A673 (cell line): ENCODE measurements at regions of chr1 and their contacts with region 1.

Region 1: GRCh38 chr1:27473755-27474154 is 16.2 kb downstream of the WASF2 start:
- DNase-seq: no peak
- H3K4me3 ChIP-seq: no peak overlapping the region
- H3K27ac ChIP-seq: no peak overlapping the region
- H3K4me1 ChIP-seq: peaks cover 4% of the 10 kb centered on the region
- H3K27me3 ChIP-seq: no peaks in the 10 kb centered on the region
- CTCF ChIP-seq: no peak

Region 2: DNA sequence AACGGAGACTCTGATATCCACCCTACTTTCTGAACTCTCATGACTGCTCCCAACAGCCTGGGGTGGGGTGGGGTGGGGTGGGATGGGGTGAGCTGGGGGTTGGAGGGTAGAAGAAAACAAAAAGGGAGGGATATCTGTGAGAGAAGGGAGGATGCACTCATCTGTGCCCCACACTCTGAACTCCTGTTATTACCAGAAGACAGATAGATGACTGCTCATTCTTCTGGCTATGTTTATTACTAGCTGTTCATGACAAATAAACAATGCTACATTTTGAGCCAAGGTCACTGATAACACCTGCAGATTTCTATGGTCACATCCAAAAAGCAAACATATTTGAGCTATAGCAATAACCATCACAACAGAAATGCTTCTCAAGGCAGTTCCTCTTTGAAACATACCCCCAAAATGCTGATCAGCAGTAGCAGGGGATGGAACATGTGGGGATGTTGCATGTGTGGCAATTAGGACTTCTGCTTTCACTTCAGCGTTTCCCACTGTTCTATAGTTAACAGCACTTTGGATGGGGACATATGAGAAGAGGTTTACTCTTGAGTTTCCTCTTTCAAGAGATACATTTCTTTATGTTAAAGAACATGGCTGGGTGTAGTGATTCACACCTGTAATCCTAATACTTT is 38.1 kb before region 1 on chr1:
- CTCF ChIA-PET with region 1: no interaction called
- POLR2A ChIA-PET with region 1: interaction called, 26 read pairs
- intact Hi-C with region 1: no loop called
- DNase-seq: no peak
- H3K4me3 ChIP-seq: no peak overlapping the region
- H3K27ac ChIP-seq: peak overlapping the region; percentile 81
- H3K4me1 ChIP-seq: peaks cover 58% of the 10 kb centered on the region
- H3K27me3 ChIP-seq: no peaks in the 10 kb centered on the region
- CTCF ChIP-seq: no peak